ENCODE measurements at regions of chr12 and their contacts with region 1.

Region 1: GRCh38 chr12:104381731-104382480 is 74.8 kb upstream of the CHST11 start:
- DNase-seq: peak; percentile 88
- ATAC-seq: peak; percentile 89

Region 2: GRCh38 chr12:104427011-104427461 is 45.1 kb after region 1 on chr12:
- intact Hi-C with region 1: no loop called
- DNase-seq: no peak
- ATAC-seq: no peak

Region 3: DNA sequence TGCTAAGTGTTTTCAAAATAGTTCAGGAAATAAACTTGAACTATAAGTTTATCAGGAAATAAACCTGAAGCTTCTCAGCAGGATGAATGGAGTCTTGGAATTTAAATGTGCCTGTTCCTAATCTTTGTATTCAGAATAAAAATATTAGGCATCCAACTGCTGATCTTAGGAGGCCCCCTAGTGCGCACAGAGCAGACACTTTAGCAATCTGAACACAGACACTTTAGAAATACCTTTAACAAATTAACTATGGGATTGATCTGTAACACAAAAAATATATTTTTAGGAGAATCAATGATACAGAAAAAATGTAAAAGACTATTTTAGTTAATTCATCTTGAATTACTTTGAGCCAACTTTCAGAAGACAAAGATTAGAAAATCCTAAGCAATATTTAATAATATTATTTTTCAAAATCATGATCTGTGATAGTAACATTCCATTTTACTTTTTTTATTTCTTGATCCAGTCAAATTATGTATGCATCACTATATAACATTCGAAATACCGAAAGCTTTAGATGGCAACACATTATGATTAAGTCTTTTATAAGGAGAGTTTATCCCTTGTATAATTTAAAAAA is 495.3 kb after region 1 on chr12:
- intact Hi-C with region 1: loop called (anchors 5 kb)
- DNase-seq: peak; percentile 63
- ATAC-seq: peak; percentile 88

Measured in sciatic nerve (tissue), 2 donors.